ENCODE measurements at regions of chr22 and their contacts with region 1.

Region 1: DNA sequence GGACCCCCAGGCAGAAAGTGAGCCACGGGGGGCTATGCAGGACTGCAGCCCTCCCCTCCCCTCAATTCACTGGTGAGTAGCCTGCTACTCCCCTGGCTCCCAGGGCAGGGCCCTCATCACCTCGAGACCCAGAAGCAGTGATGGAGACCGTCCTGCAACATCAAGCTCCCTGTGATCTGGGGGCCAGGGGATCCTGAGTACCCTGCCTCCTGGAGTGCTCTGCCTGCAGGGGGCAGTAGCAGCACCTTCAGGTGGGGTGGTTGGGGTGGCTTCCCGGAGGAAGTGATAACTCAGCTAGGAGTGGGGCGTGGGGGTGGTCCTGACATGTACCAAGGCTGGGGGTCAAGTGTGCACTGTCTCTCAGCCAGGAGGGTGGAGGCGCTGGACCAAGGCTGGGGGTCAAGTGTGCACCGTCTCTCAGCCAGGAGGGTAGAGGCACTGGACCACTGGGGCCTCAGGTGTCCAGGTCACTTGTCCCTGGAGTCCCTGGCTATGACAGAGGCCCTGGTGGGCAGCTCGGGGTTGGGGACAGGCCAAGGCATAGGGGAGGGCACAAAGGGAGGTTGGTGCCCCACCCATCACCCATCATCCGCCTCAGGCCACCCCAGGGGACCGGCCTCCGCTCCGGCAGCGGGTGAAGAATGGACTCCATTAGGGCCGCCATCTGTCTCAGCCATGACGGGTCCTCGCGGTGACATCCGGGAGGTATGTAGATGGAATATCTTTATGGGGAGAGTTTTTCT is 9.4 kb downstream of the RTN4R start:
- DNase-seq: no peak
- H3K4me3 ChIP-seq: no peak overlapping the region
- CTCF ChIP-seq: no peak

Region 2: GRCh38 chr22:20174785-20175596 is 83.8 kb before region 1 on chr22:
- in situ Hi-C with region 1: loop called (anchors 5 kb)
- DNase-seq: no peak
- H3K4me3 ChIP-seq: no peak overlapping the region
- CTCF ChIP-seq: peak; percentile 44

Measured in astrocyte of the cerebellum (primary cell).